ENCODE measurements at regions of chr18 and their contacts with region 1.

Region 1: GRCh38 chr18:49728542-49728941 is 84.8 kb downstream of the ACAA2 start:
- DNase-seq: peak; percentile 70
- H3K4me3 Mint-ChIP-seq: no peak overlapping the region
- H3K27ac Mint-ChIP-seq: no peak overlapping the region
- H3K4me1 Mint-ChIP-seq: peaks cover 44% of the 10 kb centered on the region
- H3K27me3 Mint-ChIP-seq: no peaks in the 10 kb centered on the region
- CTCF ChIP-seq: no peak

Region 2: DNA sequence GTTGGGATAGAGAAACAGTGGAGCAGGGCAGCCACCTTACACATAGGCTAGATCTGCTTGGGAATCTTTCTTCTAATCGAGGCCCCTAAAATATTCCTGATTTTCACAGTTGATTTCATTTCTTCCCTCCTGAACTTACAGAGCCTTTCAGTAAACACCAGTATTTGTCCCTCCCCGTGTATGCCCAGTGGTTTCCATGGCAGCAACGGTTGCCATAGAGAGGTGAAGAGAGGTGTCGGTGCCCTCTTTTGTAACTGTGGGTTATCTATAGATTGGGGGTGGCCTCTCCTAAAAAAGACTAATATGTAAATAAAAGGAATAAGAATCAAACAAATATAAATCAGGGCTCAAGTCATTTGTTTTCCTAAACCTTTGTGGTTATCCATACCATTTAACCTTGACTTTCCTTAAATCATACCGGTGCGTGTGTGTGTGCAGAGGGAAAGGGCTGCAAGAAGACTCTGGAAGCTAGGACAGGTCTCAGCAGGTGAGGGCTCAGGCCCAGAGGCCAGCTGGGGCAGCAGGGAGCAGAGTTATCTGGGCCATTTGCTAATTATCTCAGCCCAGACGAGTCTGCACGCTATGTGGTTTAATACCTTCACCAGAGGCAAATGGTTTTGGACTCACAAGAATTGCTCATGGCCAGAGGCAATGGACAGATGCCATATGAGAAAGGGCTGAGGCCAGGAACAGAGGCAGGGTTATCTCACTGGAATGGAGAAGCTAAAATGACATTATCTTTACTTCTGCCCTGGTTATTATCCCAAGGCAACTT is 131.2 kb before region 1 on chr18:
- CTCF ChIA-PET with region 1: no interaction called
- intact Hi-C with region 1: loop called (anchors 10 kb)
- DNase-seq: no peak
- H3K4me3 Mint-ChIP-seq: no peak overlapping the region
- H3K27ac Mint-ChIP-seq: no peak overlapping the region
- H3K4me1 Mint-ChIP-seq: no peaks in the 10 kb centered on the region
- H3K27me3 Mint-ChIP-seq: no peaks in the 10 kb centered on the region
- CTCF ChIP-seq: no peak

Measured in Calu3 (cell line).